Sigmoid colon (tissue), 7 donors: ENCODE measurements at regions of chr3 and their contacts with region 1.

Region 1: GRCh38 chr3:55485211-55485791 is 1.8 kb downstream of the WNT5A start:
- DNase-seq: peak; percentile 91
- H3K4me3 ChIP-seq: peak overlapping the region; percentile 50 to 86 (median 75)
- H3K27ac ChIP-seq: peak overlapping the region; percentile 79 to 83 (median 82)
- H3K4me1 ChIP-seq: peaks cover 0 to 45% (median 37%) of the 10 kb centered on the region in 4 donors
- H3K27me3 ChIP-seq: peaks cover 0 to 5% (median 0%) of the 10 kb centered on the region in 3 donors
- CTCF ChIP-seq: peak in 3 of 4 experiments; percentile 3 to 95 (median 45)
- EP300 ChIP-seq: no peak
- POLR2A ChIP-seq: no peak

Region 2: GRCh38 chr3:54853573-54854404 is 631.5 kb before region 1 on chr3:
- intact Hi-C with region 1: loop called (anchors 2 kb)
- DNase-seq: peak; percentile 86
- H3K4me3 ChIP-seq: no peak overlapping the region
- H3K27ac ChIP-seq: no peak overlapping the region
- H3K4me1 ChIP-seq: peaks cover 0 to 9% (median 6%) of the 10 kb centered on the region in 4 donors
- H3K27me3 ChIP-seq: no peaks in the 10 kb centered on the region
- CTCF ChIP-seq: peak; percentile 14 to 92 (median 88)
- EP300 ChIP-seq: no peak
- POLR2A ChIP-seq: no peak

Region 3: GRCh38 chr3:54951405-54951804 is 533.9 kb before region 1 on chr3:
- intact Hi-C with region 1: loop called (anchors 10 kb)
- DNase-seq: peak; percentile 90
- H3K4me3 ChIP-seq: no peak overlapping the region
- H3K27ac ChIP-seq: peak overlapping the region in 1 of 4 donors; percentile 44
- H3K4me1 ChIP-seq: peaks cover 0 to 39% (median 22%) of the 10 kb centered on the region in 4 donors
- H3K27me3 ChIP-seq: no peaks in the 10 kb centered on the region
- CTCF ChIP-seq: peak; percentile 37 to 73 (median 64)
- EP300 ChIP-seq: no peak
- POLR2A ChIP-seq: no peak

Region 4: DNA sequence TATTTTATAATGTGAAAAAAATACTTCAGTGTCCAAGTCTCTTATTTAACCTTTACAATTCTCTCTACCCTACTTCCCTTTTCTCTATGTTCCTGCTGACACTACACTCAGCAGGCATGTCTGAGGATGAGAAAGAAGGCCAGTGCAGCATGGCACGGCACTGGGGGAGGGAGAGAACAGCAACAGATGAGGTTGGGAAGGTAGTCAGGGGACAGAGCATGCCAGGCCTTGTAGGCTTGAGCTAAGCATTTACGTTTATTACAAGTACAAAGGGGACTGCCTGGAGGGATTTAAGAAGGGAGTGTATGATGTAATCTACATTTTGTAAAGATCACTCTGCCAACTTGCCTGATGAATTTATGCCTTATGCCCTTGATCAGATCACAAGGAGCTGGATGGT is 119.1 kb after region 1 on chr3:
- intact Hi-C with region 1: no loop called
- DNase-seq: no peak
- H3K4me3 ChIP-seq: no peak overlapping the region
- H3K27ac ChIP-seq: no peak overlapping the region
- H3K4me1 ChIP-seq: peaks cover 0 to 9% (median 3%) of the 10 kb centered on the region in 4 donors
- H3K27me3 ChIP-seq: no peaks in the 10 kb centered on the region
- CTCF ChIP-seq: no peak
- EP300 ChIP-seq: no peak
- POLR2A ChIP-seq: no peak

Region 5: DNA sequence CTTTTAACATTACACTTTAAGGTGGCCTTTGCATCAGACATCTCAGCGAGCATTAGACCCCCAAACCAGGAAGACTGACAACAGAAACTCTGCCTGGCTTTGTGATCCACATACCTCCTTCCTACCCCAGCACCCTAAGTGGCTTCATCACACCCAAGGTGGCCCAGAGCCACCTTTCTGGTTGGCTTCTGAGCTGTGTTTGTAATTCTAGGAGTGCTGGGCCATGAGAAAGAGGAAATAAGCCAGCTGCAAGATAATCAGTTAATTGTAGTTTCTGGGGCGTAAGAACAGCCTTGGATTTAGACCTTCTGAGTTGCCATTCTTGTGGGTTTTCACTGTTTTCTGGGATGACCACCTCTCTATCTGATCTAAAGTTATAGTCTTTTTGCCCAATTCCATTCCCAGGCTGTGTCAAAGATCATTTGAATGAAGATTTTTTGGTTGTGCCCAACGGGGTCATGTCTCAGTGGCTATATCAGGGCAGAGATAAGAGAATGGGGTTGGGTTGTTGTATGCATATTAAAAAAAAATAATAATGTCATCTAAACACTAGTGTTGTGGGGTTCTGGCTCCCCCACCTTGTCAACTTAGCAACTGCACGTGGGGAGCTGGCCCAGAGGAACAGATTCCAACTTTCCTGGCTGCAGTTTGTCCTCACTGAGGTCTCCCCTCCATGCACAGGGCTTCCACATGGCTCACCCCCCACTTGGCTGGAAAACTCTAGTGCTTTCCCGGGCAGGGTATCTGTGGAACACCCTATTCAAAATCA is 236.6 kb after region 1 on chr3:
- intact Hi-C with region 1: loop called (anchors 2 kb)
- DNase-seq: no peak
- H3K4me3 ChIP-seq: no peak overlapping the region
- H3K27ac ChIP-seq: no peak overlapping the region
- H3K4me1 ChIP-seq: peaks cover 0 to 15% (median 6%) of the 10 kb centered on the region in 4 donors
- H3K27me3 ChIP-seq: no peaks in the 10 kb centered on the region
- CTCF ChIP-seq: peak in 3 of 4 experiments; percentile 22 to 54 (median 45)
- EP300 ChIP-seq: no peak
- POLR2A ChIP-seq: no peak

Region 6: DNA sequence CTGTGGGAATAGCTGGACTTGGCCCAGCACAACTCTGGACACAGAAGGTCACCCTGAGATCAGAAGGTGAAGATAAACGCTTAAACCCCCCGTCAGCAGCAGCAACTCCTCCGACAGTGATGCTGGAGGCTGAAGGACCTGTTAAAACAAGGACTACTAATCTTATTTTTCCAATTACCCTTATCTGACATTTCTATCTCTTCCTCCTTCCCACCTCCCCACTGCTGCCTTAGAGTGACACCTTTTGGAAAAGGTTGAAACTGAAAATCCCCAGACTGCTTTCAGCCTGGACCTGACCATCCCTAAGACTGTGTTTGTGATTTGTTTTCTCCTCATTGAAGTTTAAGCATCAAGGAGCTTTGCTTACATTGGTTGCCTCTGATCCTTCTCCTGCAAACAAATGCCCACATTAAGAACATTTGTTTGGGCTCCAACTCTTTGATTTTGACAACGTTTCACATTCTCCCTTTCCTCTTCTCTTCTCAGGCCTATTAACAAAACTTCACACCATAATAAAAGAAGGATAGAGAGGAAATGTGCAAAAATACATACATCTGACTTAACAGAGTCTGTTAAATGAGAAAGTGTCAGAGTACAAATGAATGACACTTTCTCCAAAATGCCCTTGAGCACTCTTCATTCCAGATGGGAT is 412.4 kb after region 1 on chr3:
- intact Hi-C with region 1: no loop called
- DNase-seq: no peak
- H3K4me3 ChIP-seq: no peak overlapping the region
- H3K27ac ChIP-seq: no peak overlapping the region
- H3K4me1 ChIP-seq: no peaks in the 10 kb centered on the region
- H3K27me3 ChIP-seq: no peaks in the 10 kb centered on the region
- CTCF ChIP-seq: peak in 1 of 4 experiments; percentile 12
- EP300 ChIP-seq: no peak
- POLR2A ChIP-seq: no peak

Region 7: DNA sequence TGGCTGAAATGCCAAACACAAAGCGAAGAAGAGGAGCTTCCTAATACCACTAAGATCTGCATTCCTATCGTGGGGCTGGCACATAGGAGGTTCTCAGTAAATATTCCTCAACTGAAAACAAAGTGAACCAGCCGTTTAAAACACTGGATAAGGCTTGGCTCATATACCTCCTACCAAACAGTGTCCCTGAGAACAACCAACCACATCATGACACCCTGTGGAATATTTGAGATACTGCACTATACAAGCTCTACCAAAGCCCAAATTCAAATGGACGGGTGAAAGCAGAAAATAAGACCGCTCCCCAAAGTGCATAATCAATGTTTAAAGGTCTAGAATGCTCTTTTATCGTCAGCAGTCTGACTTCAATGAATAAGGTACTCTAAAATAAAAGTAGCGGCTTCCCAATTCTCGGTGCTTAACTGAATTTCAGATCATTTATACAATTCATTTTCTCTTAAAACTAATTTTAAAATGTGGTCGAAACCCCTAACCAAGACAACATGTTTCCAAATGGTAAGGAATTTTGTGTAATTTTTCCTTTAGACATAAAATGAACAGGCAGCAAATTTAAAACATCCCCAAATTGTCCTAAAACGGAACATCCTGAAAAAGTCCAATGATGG is 557.1 kb after region 1 on chr3:
- intact Hi-C with region 1: loop called (anchors 5 kb)
- DNase-seq: no peak
- H3K4me3 ChIP-seq: no peak overlapping the region
- H3K27ac ChIP-seq: no peak overlapping the region
- H3K4me1 ChIP-seq: no peaks in the 10 kb centered on the region
- H3K27me3 ChIP-seq: no peaks in the 10 kb centered on the region
- CTCF ChIP-seq: peak in 3 of 4 experiments; percentile 28 to 43 (median 32)
- EP300 ChIP-seq: no peak
- POLR2A ChIP-seq: no peak

Region 8: GRCh38 chr3:56494686-56495322 is 1009.5 kb after region 1 on chr3:
- intact Hi-C with region 1: loop called (anchors 10 kb)
- DNase-seq: peak; percentile 71
- H3K4me3 ChIP-seq: no peak overlapping the region
- H3K27ac ChIP-seq: no peak overlapping the region
- H3K4me1 ChIP-seq: no peaks in the 10 kb centered on the region
- H3K27me3 ChIP-seq: peaks cover 0 to 11% (median 0%) of the 10 kb centered on the region in 3 donors
- CTCF ChIP-seq: peak in 3 of 4 experiments; percentile 73 to 87 (median 82)
- EP300 ChIP-seq: no peak
- POLR2A ChIP-seq: no peak